SK-N-SH (cell line): ENCODE measurements at regions of chr1 and their contacts with region 1.

Region 1: GRCh38 chr1:153990468-153991150 is at the start of gene RPS27:
- DNase-seq: peak; percentile 90
- H3K4me3 ChIP-seq: peak within 1 kb of the TSS; percentile 82 to 85
- H3K27ac ChIP-seq: peak within 1 kb of the TSS; percentile 79 to 92
- H3K4me1 ChIP-seq: peaks cover 19 to 21% of the 10 kb centered on the region in 2 experiments; a peak in 3 of 4 replicates
- H3K27me3 ChIP-seq: no peaks in the 10 kb centered on the region
- CTCF ChIP-seq: no peak
- EP300 ChIP-seq: no peak
- RAD21 ChIP-seq: no peak
- polyA plus RNA-seq, gene RPS27: 7,060 and 7,825 TPM in 2 replicates

Region 2: DNA sequence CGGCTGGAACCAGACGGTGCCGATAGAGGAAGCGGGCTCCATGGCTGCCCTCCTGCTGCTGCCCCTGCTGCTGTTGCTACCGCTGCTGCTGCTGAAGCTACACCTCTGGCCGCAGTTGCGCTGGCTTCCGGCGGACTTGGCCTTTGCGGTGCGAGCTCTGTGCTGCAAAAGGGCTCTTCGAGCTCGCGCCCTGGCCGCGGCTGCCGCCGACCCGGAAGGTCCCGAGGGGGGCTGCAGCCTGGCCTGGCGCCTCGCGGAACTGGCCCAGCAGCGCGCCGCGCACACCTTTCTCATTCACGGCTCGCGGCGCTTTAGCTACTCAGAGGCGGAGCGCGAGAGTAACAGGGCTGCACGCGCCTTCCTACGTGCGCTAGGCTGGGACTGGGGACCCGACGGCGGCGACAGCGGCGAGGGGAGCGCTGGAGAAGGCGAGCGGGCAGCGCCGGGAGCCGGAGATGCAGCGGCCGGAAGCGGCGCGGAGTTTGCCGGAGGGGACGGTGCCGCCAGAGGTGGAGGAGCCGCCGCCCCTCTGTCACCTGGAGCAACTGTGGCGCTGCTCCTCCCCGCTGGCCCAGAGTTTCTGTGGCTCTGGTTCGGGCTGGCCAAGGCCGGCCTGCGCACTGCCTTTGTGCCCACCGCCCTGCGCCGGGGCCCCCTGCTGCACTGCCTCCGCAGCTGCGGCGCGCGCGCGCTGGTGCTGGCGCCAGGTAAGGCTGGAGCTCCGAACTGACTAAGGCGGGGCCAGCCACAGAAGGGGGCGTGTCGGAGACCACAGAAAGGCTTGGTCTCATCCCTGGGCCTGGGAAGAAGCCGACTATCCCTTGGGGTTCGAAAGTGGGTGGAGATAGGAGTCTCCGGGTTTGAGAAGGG is 214.9 kb before region 1 on chr1:
- CTCF ChIA-PET with region 1: interaction called, 16 read pairs
- POLR2A ChIA-PET with region 1: interaction called, 7 read pairs
- DNase-seq: peak; percentile 81
- H3K4me3 ChIP-seq: peak overlapping the region; percentile 65 to 67
- H3K27ac ChIP-seq: peak overlapping the region in 1 of 2 experiments; percentile 69; a peak in 2 of 4 replicates
- H3K4me1 ChIP-seq: peaks cover 0 to 13% of the 10 kb centered on the region in 2 experiments; a peak in 1 of 4 replicates
- H3K27me3 ChIP-seq: no peaks in the 10 kb centered on the region
- CTCF ChIP-seq: 0 out of 2 replicates have a peak, but pooled peaks have one; percentile 7
- EP300 ChIP-seq: no peak
- RAD21 ChIP-seq: no peak

Region 3: GRCh38 chr1:153796791-153797659 is 193.6 kb before region 1 on chr1:
- CTCF ChIA-PET with region 1: interaction called, 61 read pairs
- POLR2A ChIA-PET with region 1: interaction called, 5 read pairs
- DNase-seq: peak; percentile 90
- H3K4me3 ChIP-seq: no peak overlapping the region; a peak in 1 of 4 replicates
- H3K27ac ChIP-seq: no peak overlapping the region
- H3K4me1 ChIP-seq: no peaks in the 10 kb centered on the region; a peak in 1 of 4 replicates
- H3K27me3 ChIP-seq: no peaks in the 10 kb centered on the region
- CTCF ChIP-seq: peak; percentile 85
- EP300 ChIP-seq: no peak
- RAD21 ChIP-seq: peak; percentile 84

Region 4: GRCh38 chr1:153827168-153827964 is 163.2 kb before region 1 on chr1:
- CTCF ChIA-PET with region 1: interaction called, 42 read pairs
- POLR2A ChIA-PET with region 1: no interaction called
- DNase-seq: no peak
- H3K4me3 ChIP-seq: no peak overlapping the region
- H3K27ac ChIP-seq: no peak overlapping the region
- H3K4me1 ChIP-seq: no peaks in the 10 kb centered on the region
- H3K27me3 ChIP-seq: no peaks in the 10 kb centered on the region
- CTCF ChIP-seq: peak; percentile 35; the same call in 1 of the 2 replicates
- EP300 ChIP-seq: no peak
- RAD21 ChIP-seq: no peak

Region 5: DNA sequence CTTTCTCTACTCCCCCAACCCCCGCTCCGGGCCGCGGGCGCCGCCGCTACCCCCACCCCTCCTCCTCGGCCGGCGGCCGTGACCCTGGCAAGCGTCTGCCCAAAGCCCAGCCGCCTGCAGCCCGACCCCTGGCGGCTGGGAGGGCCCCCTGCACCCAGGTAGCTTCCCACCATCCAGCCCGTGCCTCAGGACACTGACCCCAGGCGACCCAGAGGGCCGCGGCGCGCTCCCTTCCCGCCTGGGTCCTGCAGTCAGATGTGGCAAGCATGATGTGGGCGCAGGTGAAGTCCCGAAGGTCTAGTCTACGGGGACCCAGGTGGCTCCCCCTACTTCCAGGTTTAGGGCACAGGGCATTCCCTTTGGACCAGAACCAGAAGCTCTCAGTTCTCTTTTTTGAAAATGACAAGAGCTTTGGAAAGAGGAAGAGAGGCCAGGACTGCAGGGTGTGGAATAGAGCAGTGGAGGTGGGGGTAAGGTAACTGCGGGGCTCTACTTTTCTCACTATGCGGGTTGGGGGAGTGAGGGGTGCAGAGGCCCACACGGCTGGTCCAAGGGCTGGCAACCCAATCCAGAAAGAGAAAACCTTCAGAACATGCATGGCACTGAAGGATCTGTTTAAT is 43.9 kb before region 1 on chr1 and contains the start of gene DENND4B:
- CTCF ChIA-PET with region 1: interaction called, 37 read pairs
- POLR2A ChIA-PET with region 1: interaction called, 9 read pairs
- DNase-seq: peak; percentile 99
- H3K4me3 ChIP-seq: peak within 1 kb of the TSS; percentile 85 to 91
- H3K27ac ChIP-seq: peak within 1 kb of the TSS; percentile 60 to 89
- H3K4me1 ChIP-seq: peaks cover 3 to 17% of the 10 kb centered on the region in 2 experiments; a peak in 2 of 4 replicates
- H3K27me3 ChIP-seq: no peaks in the 10 kb centered on the region
- CTCF ChIP-seq: peak; percentile 76
- EP300 ChIP-seq: 0 out of 4 replicates have a peak, but pooled peaks of 1 of the 2 experiments have one; percentile 20
- RAD21 ChIP-seq: peak; percentile 62
- polyA plus RNA-seq, gene DENND4B: 27.3 and 29.6 TPM in 2 replicates

Region 6: DNA sequence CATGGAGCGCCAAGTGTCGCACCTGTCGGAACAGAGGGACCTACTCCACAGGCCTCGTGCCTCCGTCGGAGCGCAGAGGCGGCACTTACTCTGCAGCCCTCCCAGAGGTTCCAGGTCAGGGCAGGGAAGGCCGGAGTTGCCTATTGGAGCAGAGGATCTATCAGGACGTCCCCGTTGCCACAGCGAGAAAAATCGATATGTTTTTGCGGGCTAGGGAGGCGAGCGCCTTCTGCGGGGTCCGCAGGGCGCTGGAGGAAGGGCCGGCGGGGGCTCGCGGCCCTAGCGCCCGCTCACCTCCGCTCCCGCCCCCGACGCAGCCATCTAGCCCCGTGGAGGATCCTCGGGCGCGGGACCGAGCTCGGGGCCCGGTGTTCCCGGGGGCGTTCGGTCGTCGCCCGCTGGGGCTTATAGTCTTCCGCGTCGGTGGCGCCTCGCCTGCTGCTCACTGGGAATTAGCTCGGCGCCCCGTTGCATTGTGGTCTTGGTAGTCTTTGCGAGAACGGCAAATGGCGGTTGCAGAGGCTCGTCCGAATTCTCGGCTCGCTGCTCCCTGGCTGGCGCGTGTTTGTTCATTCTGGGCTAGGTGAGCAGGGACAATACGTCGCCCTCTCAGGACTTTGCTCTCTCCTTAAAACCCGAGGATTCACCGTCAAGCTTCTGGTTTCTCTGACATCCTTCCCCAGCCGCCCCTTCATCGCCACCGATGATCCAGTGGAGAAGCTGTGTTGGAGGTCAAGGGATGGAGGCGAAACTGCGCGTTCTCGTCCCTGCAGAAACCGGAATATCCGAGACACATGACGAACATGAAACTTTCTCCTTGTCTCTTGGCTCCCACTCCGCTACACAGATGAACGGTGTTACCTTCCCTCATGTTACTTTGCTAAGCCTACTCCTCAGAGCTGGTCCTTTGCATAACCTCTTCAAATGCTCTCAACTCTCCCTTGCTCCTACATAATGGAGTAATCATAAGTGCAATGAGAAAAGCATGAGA is 13.1 kb before region 1 on chr1 and contains the start of gene JTB:
- CTCF ChIA-PET with region 1: interaction called, 68 read pairs
- POLR2A ChIA-PET with region 1: interaction called, 59 read pairs
- DNase-seq: peak; percentile 89
- H3K4me3 ChIP-seq: peak within 1 kb of the TSS; percentile 92 to 95
- H3K27ac ChIP-seq: peak within 1 kb of the TSS; percentile 63 to 91; a peak in 3 of 4 replicates
- H3K4me1 ChIP-seq: peaks cover 5 to 16% of the 10 kb centered on the region in 2 experiments; a peak in 2 of 4 replicates
- H3K27me3 ChIP-seq: no peaks in the 10 kb centered on the region
- CTCF ChIP-seq: no peak
- EP300 ChIP-seq: no peak
- RAD21 ChIP-seq: no peak
- polyA plus RNA-seq, gene JTB: 118 and 122 TPM in 2 replicates